Activated CD4-positive, alpha-beta memory T cell treated with anti-CD3 and anti-CD28 coated beads for 36 hours (primary cell): ENCODE measurements at regions of chr3 and their contacts with region 1.

Region 1: GRCh38 chr3:156787926-156788663 is 38.1 kb upstream of the LEKR1 start:
- DNase-seq: peak; percentile 71
- H3K4me3 Mint-ChIP-seq: no peak overlapping the region
- H3K27ac Mint-ChIP-seq: no peak overlapping the region
- H3K4me1 Mint-ChIP-seq: peaks cover 27% of the 10 kb centered on the region
- H3K27me3 Mint-ChIP-seq: no peaks in the 10 kb centered on the region

Region 2: GRCh38 chr3:156723182-156723619 is 64.9 kb before region 1 on chr3:
- CTCF ChIA-PET with region 1: no interaction called
- POLR2A ChIA-PET with region 1: no interaction called
- intact Hi-C with region 1: loop called (anchors 2 kb)
- DNase-seq: peak; percentile 44
- H3K4me3 Mint-ChIP-seq: no peak overlapping the region
- H3K27ac Mint-ChIP-seq: no peak overlapping the region
- H3K4me1 Mint-ChIP-seq: peaks cover 10% of the 10 kb centered on the region
- H3K27me3 Mint-ChIP-seq: no peaks in the 10 kb centered on the region

Region 3: DNA sequence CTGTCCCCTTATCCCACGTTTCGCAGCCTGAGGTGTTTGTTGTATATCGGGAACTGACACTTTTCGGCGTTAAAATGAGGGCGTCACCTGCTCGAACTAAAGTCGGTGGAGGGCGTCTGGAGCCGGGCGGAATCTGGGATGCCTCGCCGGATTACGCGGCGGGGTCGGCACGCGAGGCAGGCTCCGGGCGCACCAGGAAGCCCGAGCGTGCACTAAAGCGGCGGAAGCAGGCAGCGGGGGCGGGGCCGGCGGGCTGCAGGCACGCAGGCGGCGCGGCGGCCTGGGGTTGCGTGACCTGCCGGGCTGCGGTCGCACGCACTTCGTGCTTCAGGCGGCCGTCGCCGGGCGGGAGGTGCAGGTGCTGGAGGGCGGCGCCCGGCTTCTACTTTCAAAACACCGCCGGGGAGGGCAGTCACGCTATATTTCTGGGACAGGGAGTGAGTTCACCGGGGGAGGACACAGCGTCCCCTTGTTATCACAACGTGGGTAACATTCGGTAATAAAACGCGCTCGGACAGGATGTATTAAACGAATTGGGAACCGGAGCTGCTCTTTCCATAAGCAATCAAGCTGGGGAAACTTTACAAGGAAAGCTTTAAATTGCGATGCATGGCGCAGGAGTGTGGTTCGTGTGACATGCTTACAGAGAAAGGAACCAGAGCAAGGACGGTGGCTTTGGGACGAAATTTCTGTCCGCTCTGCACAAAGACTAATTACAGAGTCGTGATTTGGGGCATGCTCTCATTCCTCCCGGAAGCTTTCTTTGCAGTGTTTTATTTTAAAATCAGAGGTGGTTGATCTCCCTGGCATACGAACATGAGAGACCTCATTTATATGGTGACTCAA is 28.9 kb after region 1 on chr3:
- CTCF ChIA-PET with region 1: interaction called, 4 read pairs
- POLR2A ChIA-PET with region 1: no interaction called
- intact Hi-C with region 1: loop called (anchors 2 kb)
- DNase-seq: peak; percentile 92
- H3K4me3 Mint-ChIP-seq: peak overlapping the region; percentile 85
- H3K27ac Mint-ChIP-seq: peak overlapping the region; percentile 90
- H3K4me1 Mint-ChIP-seq: peaks cover 43% of the 10 kb centered on the region
- H3K27me3 Mint-ChIP-seq: no peaks in the 10 kb centered on the region

Region 4: DNA sequence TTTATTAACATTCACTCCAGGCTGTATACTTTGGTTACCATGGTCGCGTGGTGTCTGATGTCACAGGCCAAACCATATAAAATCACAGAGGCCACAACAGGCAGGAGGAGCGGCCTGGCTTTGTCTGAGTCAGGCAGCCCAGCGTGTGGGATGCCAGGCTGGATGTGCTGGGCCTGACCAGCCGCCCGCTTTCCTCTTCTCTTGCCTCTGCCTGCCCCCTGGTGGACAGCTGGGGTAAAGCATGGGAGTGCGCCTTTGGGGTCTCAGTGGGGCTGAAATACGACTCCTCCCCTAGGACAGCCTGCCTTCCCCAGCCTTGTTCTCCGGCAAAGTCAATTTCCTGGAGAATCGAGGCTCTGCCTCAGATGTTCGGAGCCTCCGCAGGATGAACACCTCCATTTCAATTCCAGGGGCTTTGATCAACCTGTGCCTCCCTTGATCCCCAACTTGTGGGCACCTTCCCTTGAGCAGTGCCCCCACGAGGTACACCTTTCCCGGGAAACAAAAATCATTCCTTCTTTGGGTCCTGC is 293.7 kb after region 1 on chr3:
- CTCF ChIA-PET with region 1: no interaction called
- POLR2A ChIA-PET with region 1: no interaction called
- intact Hi-C with region 1: loop called (anchors 1 kb)
- DNase-seq: peak; percentile 90
- H3K4me3 Mint-ChIP-seq: no peak overlapping the region
- H3K27ac Mint-ChIP-seq: no peak overlapping the region
- H3K4me1 Mint-ChIP-seq: peaks cover 31% of the 10 kb centered on the region
- H3K27me3 Mint-ChIP-seq: no peaks in the 10 kb centered on the region